Activated CD4-positive, alpha-beta memory T cell treated with anti-CD3 and anti-CD28 coated beads for 36 hours (primary cell): ENCODE measurements at regions of chr11 and their contacts with region 1.

Region 1: DNA sequence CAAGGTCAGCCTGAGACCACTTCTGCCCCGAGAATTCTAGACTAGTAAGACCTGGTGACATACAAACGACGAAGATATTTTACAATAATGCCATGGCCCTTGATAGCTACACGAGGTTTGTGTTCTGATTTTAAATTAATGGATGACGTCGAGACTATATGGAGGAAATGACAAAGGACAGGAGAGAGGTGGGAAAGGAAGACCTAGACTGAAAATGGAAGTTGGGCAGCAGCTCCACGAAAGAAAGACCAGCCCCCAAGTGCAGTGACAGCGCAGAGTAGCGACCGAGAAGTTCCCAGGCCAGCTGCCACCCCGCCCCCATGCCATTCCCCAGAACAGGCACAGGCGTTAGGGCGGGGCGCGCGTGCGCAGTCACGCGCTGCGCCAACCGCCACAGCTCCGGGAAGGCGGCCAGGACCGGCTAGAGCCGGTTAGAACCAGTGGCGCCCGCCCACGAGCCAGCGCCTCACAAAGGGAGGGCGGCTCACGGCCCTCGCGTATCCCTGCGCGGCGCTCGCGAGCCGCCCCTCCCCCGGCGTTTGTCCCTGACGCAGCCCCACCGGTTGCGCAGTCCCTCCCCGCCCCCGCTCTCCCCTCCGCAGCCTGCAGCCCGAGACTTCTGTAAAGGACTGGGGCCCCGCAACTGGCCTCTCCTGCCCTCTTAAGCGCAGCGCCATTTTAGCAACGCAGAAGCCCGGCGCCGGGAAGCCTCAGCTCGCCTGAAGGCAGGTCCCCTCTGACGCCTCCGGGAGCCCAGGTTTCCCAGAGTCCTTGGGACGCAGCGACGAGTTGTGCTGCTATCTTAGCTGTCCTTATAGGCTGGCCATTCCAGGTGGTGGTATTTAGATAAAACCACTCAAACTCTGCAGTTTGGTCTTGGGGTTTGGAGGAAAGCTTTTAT is 1.5 kb upstream of the MALAT1 start:
- DNase-seq: peak; percentile 99
- H3K4me3 Mint-ChIP-seq: no peak overlapping the region
- H3K27ac Mint-ChIP-seq: no peak overlapping the region
- H3K4me1 Mint-ChIP-seq: peaks cover 38% of the 10 kb centered on the region
- H3K27me3 Mint-ChIP-seq: peaks cover 10% of the 10 kb centered on the region

Region 2: DNA sequence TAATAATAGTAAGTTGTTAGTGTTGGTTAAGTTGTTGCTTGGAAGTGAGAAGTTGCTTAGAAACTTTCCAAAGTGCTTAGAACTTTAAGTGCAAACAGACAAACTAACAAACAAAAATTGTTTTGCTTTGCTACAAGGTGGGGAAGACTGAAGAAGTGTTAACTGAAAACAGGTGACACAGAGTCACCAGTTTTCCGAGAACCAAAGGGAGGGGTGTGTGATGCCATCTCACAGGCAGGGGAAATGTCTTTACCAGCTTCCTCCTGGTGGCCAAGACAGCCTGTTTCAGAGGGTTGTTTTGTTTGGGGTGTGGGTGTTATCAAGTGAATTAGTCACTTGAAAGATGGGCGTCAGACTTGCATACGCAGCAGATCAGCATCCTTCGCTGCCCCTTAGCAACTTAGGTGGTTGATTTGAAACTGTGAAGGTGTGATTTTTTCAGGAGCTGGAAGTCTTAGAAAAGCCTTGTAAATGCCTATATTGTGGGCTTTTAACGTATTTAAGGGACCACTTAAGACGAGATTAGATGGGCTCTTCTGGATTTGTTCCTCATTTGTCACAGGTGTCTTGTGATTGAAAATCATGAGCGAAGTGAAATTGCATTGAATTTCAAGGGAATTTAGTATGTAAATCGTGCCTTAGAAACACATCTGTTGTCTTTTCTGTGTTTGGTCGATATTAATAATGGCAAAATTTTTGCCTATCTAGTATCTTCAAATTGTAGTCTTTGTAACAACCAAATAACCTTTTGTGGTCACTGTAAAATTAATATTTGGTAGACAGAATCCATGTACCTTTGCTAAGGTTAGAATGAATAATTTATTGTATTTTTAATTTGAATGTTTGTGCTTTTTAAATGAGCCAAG is 72.1 kb before region 1 on chr11:
- CTCF ChIA-PET with region 1: interaction called, 52 read pairs
- POLR2A ChIA-PET with region 1: interaction called, 4,089 read pairs
- intact Hi-C with region 1: loop called (anchors 1 kb)
- DNase-seq: peak; percentile 91
- H3K4me3 Mint-ChIP-seq: peak overlapping the region; percentile 97
- H3K27ac Mint-ChIP-seq: peak overlapping the region; percentile 100
- H3K4me1 Mint-ChIP-seq: peaks cover 56% of the 10 kb centered on the region
- H3K27me3 Mint-ChIP-seq: peaks cover 24% of the 10 kb centered on the region

Region 3: GRCh38 chr11:65440831-65441499 is 56.4 kb before region 1 on chr11:
- CTCF ChIA-PET with region 1: no interaction called
- POLR2A ChIA-PET with region 1: interaction called, 30 read pairs
- intact Hi-C with region 1: no loop called
- DNase-seq: peak; percentile 25
- H3K4me3 Mint-ChIP-seq: peak overlapping the region; percentile 34
- H3K27ac Mint-ChIP-seq: peak overlapping the region; percentile 90
- H3K4me1 Mint-ChIP-seq: peaks cover 65% of the 10 kb centered on the region
- H3K27me3 Mint-ChIP-seq: no peaks in the 10 kb centered on the region

Region 4: DNA sequence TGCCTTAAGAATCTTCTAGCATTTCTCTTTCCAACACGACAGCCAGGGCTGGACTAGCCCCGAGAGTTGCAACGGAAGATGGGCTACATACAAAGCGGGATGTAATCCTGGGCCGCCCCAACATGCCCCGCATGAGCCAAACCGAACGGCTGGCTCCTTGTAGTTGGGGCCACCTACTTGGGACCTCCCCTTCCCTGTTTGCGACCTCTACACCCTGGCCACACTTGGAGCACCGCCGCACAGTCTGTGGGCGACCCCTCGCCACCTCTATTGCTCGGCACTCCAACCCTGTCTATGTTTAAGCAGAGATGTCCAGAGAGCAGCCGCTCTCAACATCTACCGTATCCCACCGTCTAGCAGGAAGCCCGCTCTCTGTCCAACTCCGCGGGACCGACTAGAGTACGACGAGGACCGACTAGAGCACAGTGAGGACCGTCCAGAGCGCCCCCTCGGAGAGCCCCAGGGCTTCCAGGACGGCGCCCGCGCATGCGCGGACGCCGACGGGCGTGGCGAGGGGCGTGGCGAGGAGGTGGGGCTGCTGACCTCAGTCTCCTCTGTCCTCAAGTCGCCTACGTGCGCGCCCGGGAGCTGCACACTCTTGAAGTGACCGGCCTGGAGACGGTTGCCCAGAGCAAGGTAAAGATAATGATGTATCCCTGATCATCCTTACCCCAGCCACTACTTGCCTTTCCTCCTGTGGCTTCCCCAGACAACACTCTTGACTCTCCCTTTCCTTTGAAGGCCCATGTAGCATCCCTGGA is 42.5 kb before region 1 on chr11:
- CTCF ChIA-PET with region 1: no interaction called
- POLR2A ChIA-PET with region 1: interaction called, 12 read pairs
- intact Hi-C with region 1: no loop called
- DNase-seq: peak; percentile 92
- H3K4me3 Mint-ChIP-seq: peak overlapping the region; percentile 91
- H3K27ac Mint-ChIP-seq: peak overlapping the region; percentile 79
- H3K4me1 Mint-ChIP-seq: peaks cover 41% of the 10 kb centered on the region
- H3K27me3 Mint-ChIP-seq: no peaks in the 10 kb centered on the region

Region 5: GRCh38 chr11:65477149-65477965 is 20.0 kb before region 1 on chr11:
- CTCF ChIA-PET with region 1: interaction called, 41 read pairs
- POLR2A ChIA-PET with region 1: interaction called, 824 read pairs
- intact Hi-C with region 1: loop called (anchors 1 kb)
- DNase-seq: peak; percentile 96
- H3K4me3 Mint-ChIP-seq: peak overlapping the region; percentile 91
- H3K27ac Mint-ChIP-seq: peak overlapping the region; percentile 95
- H3K4me1 Mint-ChIP-seq: peaks cover 19% of the 10 kb centered on the region
- H3K27me3 Mint-ChIP-seq: no peaks in the 10 kb centered on the region